Caco-2 (cell line): ENCODE measurements at regions of chr15 and their contacts with region 1.

Region 1: DNA sequence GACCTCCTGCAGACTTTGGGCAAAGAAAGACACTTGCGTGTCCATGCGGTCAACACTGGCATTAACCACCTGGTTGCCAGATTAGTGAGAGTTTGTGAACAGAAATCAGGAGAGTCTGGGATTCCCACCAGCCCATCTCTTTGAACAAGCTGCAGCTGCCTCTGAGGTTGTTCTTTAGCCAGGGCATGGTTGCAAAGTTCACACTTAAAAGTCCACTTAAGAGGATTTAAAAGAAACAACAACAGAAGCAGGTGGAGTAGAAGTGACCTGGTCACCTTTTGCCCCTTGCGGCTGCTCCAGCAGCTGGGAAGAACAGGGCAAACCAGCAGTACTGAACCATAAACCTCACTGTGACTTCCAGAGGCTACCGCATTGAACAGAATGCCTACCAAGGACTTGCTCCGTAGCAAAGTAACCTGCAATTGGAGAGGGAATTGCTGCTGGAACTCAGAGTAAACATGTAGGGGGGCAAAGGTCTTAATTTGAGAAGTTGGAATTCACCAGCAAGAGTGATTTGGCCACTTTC is 97.4 kb downstream of the FOXB1 start:
- DNase-seq: peak; percentile 18 to 40
- H3K4me3 ChIP-seq: no peak overlapping the region
- H3K4me3 Mint-ChIP-seq: no peak overlapping the region
- H3K27ac Mint-ChIP-seq: no peak overlapping the region
- H3K4me1 ChIP-seq: 0 out of 2 replicates have a peak, but pooled peaks cover 4% of the 10 kb centered on the region
- H3K4me1 Mint-ChIP-seq: no peaks in the 10 kb centered on the region
- H3K27me3 ChIP-seq: no peaks in the 10 kb centered on the region
- H3K27me3 Mint-ChIP-seq: peaks cover 2% of the 10 kb centered on the region
- CTCF ChIP-seq: no peak

Region 2: GRCh38 chr15:60070838-60071493 is 30.5 kb before region 1 on chr15:
- CTCF ChIA-PET with region 1: no interaction called
- POLR2A ChIA-PET with region 1: no interaction called
- intact Hi-C with region 1: no loop called
- DNase-seq: no peak
- H3K4me3 ChIP-seq: no peak overlapping the region
- H3K4me3 Mint-ChIP-seq: no peak overlapping the region
- H3K27ac Mint-ChIP-seq: no peak overlapping the region
- H3K4me1 ChIP-seq: no peaks in the 10 kb centered on the region
- H3K4me1 Mint-ChIP-seq: no peaks in the 10 kb centered on the region
- H3K27me3 ChIP-seq: no peaks in the 10 kb centered on the region
- H3K27me3 Mint-ChIP-seq: peaks cover 15% of the 10 kb centered on the region
- CTCF ChIP-seq: no peak

Region 3: GRCh38 chr15:60091165-60091564 is 10.3 kb before region 1 on chr15:
- CTCF ChIA-PET with region 1: interaction called, 3 read pairs
- POLR2A ChIA-PET with region 1: no interaction called
- intact Hi-C with region 1: loop called (anchors 1 kb)
- DNase-seq: peak; percentile 78 to 83
- H3K4me3 ChIP-seq: no peak overlapping the region
- H3K4me3 Mint-ChIP-seq: no peak overlapping the region
- H3K27ac Mint-ChIP-seq: peak overlapping the region; percentile 40
- H3K4me1 ChIP-seq: peaks cover 30% of the 10 kb centered on the region
- H3K4me1 Mint-ChIP-seq: peaks cover 16% of the 10 kb centered on the region
- H3K27me3 ChIP-seq: no peaks in the 10 kb centered on the region
- H3K27me3 Mint-ChIP-seq: no peaks in the 10 kb centered on the region
- CTCF ChIP-seq: no peak